ENCODE measurements at regions of chr12 and their contacts with region 1.

Region 1: GRCh38 chr12:100154474-100155247 is 12.0 kb upstream of the BLTP3B start:
- DNase-seq: no peak
- H3K4me3 ChIP-seq: no peak overlapping the region
- H3K27ac ChIP-seq: no peak overlapping the region
- H3K27me3 ChIP-seq: peaks cover 6% of the 10 kb centered on the region
- CTCF ChIP-seq: peak; percentile 85

Region 2: DNA sequence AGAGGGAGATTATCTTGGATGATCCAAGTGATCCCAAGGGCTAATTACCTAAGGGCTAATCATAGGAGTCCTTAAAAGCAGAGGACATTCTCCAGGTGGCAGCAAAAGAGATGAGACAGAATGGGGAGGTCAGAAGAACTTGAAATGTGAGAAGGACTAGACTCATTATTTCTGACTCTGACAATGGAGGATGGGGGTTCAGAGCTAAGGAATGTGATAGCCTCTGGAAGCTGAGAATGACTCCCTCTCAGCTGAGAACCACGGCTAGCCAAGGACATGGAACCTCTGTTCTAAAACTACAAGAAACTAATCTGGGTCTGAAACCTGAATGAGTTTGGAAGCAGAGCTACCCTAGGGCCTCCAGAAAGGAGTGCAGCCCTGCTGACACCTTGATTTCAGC is 134.3 kb before region 1 on chr12:
- CTCF ChIA-PET with region 1: no interaction called
- POLR2A ChIA-PET with region 1: no interaction called
- DNase-seq: no peak
- H3K4me3 ChIP-seq: no peak overlapping the region
- H3K27ac ChIP-seq: no peak overlapping the region
- H3K27me3 ChIP-seq: no peaks in the 10 kb centered on the region
- CTCF ChIP-seq: no peak

Region 3: DNA sequence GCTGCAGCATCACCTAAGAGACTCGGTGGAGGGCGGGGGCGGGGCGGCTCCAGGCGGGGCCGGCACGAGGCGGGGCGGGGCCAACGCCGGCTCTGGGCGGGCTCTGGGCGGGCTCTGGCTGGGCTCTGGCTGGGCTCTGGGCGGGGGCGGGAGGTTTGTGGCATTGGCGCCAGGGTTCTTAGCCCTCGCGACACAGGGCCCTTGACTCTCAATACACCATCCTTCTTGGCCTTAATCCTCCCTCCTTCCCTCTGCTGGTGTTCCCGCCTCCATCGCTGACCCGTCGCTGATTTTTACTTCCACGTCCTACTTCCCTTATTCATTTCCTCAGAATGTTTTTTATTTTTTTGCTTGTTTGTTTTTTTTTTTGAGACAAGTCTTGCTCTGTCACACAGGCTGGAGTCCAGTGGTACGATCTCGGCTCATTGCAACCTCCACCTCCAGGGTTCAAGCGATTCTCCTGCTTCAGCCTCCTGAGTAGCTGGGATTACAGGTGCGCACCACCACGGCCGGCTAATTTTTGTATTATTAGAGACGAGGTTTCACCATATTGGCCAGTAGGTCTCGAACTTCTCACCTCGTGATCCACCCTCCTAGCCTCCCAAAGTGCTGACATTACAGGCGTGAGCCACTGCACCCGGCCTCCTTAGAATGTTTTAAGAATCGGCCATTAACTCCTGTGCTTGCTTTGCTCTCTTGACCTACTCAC is 11.7 kb before region 1 on chr12 and contains the start of gene BLTP3B:
- CTCF ChIA-PET with region 1: interaction called, 23 read pairs
- POLR2A ChIA-PET with region 1: no interaction called
- DNase-seq: peak; percentile 13
- H3K4me3 ChIP-seq: peak within 1 kb of the TSS; percentile 95
- H3K27ac ChIP-seq: peak within 1 kb of the TSS; percentile 82
- H3K27me3 ChIP-seq: no peaks in the 10 kb centered on the region
- CTCF ChIP-seq: no peak
- polyA plus RNA-seq, gene BLTP3B: 21.2 and 28.9 TPM in 2 replicates

Region 4: GRCh38 chr12:100168586-100168985 is 13.9 kb after region 1 on chr12:
- CTCF ChIA-PET with region 1: interaction called, 29 read pairs
- POLR2A ChIA-PET with region 1: no interaction called
- DNase-seq: no peak
- H3K4me3 ChIP-seq: no peak overlapping the region
- H3K27ac ChIP-seq: no peak overlapping the region
- H3K27me3 ChIP-seq: peaks cover 5% of the 10 kb centered on the region
- CTCF ChIP-seq: no peak

Region 5: GRCh38 chr12:100193085-100193484 is 38.4 kb after region 1 on chr12:
- CTCF ChIA-PET with region 1: interaction called, 10 read pairs
- POLR2A ChIA-PET with region 1: no interaction called
- DNase-seq: no peak
- H3K4me3 ChIP-seq: no peak overlapping the region
- H3K27ac ChIP-seq: no peak overlapping the region
- H3K27me3 ChIP-seq: no peaks in the 10 kb centered on the region
- CTCF ChIP-seq: no peak

Region 6: GRCh38 chr12:100215209-100215608 is 60.5 kb after region 1 on chr12:
- CTCF ChIA-PET with region 1: no interaction called
- POLR2A ChIA-PET with region 1: no interaction called
- DNase-seq: no peak
- H3K4me3 ChIP-seq: no peak overlapping the region
- H3K27ac ChIP-seq: no peak overlapping the region
- H3K27me3 ChIP-seq: no peaks in the 10 kb centered on the region
- CTCF ChIP-seq: no peak

Measured in AG04450 (cell line).